Heart right ventricle (tissue), 16 donors: ENCODE measurements at regions of chrX and their contacts with region 1.

Region 1: GRCh38 chrX:12080265-12080664 is 58.0 kb upstream of the FRMPD4 start:
- DNase-seq: no peak
- ATAC-seq: no peak
- H3K4me3 ChIP-seq: no peak overlapping the region
- H3K27ac ChIP-seq: no peak overlapping the region
- H3K4me1 ChIP-seq: no peaks in the 10 kb centered on the region
- H3K27me3 ChIP-seq: no peaks in the 10 kb centered on the region
- CTCF ChIP-seq: peak in 8 of 9 donors; percentile 25 to 62 (median 46)

Region 2: DNA sequence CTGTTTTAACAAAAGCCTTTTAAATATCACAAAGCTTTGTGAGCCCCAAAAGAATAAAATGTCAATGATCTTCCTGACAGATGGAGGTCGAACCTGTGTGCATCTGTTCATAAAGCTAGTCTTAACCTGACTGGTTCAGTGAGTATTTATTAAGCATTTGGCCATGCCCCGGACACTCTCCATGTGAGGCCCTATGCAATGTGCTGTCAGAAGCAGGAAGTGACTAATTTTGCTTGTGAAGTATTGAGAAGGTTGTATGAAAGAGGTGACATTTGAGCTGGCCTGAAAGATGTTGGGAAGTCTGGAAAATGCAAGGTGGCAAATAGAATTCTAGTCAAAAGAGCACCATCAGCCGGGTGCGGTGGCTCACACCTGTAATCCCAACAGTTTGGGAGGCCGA is 150.8 kb before region 1 on chrX:
- intact Hi-C with region 1: no loop called
- DNase-seq: no peak
- ATAC-seq: no peak
- H3K4me3 ChIP-seq: no peak overlapping the region
- H3K27ac ChIP-seq: no peak overlapping the region
- H3K4me1 ChIP-seq: no peaks in the 10 kb centered on the region
- H3K27me3 ChIP-seq: no peaks in the 10 kb centered on the region
- CTCF ChIP-seq: no peak

Region 3: DNA sequence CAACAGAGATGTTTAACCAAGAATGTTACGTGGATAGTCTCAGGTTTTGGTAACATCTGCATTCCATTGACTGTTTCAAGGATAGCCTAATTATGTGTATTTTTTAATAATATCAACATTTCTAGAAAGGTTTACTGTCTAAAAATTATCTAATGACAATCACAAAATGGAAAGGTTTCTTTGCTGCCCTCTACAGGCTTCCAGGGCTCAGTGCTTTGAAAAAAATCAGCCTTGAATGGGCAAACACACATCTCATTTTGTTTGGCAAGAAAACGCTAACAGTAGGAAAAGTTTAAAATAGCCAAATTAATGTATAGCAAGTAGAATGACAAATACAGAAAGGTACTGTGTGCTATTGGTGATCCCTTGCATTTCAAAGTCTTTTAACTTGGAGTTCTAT is 487.6 kb after region 1 on chrX:
- intact Hi-C with region 1: loop called in 1 of 10 experiments (anchors 5 kb)
- DNase-seq: no peak
- ATAC-seq: no peak
- H3K4me3 ChIP-seq: no peak overlapping the region
- H3K27ac ChIP-seq: no peak overlapping the region
- H3K4me1 ChIP-seq: peaks cover 0 to 4% (median 0%) of the 10 kb centered on the region in 9 donors
- H3K27me3 ChIP-seq: peaks cover 0 to 5% (median 0%) of the 10 kb centered on the region in 7 donors
- CTCF ChIP-seq: peak in 8 of 9 donors; percentile 21 to 65 (median 56)

Region 4: GRCh38 chrX:12693754-12694153 is 613.5 kb after region 1 on chrX:
- intact Hi-C with region 1: loop called in 2 of 10 experiments (anchors 10 kb)
- DNase-seq: no peak
- ATAC-seq: no peak
- H3K4me3 ChIP-seq: no peak overlapping the region
- H3K27ac ChIP-seq: no peak overlapping the region
- H3K4me1 ChIP-seq: no peaks in the 10 kb centered on the region
- H3K27me3 ChIP-seq: peaks cover 0 to 46% (median 0%) of the 10 kb centered on the region in 7 donors
- CTCF ChIP-seq: no peak

Region 5: DNA sequence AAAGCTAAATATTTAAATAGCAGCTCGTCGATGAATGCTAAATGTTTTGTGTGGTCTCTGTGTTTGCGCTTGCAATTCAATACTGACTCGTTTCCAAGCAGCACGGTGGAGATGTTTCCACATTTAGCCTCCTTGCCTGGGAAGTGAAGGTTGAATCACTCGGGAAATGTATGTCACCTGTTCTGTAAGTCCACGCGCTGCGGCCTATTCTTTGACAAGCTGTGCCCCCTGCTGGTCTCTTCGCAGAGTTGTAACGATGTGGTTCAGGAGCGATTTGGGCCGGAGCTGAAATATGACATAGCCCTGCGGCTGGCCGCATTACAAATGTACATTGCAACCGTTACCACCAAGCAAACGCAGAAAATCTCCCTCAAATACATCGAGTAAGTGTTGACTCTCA is 621.4 kb after region 1 on chrX:
- intact Hi-C with region 1: loop called in 5 of 10 experiments (anchors 5 to 10 kb)
- DNase-seq: peak in 1 of 2 donors; percentile 6
- ATAC-seq: peak in 1 of 8 donors; percentile 71
- H3K4me3 ChIP-seq: no peak overlapping the region
- H3K27ac ChIP-seq: no peak overlapping the region
- H3K4me1 ChIP-seq: no peaks in the 10 kb centered on the region
- H3K27me3 ChIP-seq: peaks cover 0 to 38% (median 0%) of the 10 kb centered on the region in 7 donors
- CTCF ChIP-seq: peak in 7 of 9 donors; percentile 25 to 59 (median 51)

Region 6: DNA sequence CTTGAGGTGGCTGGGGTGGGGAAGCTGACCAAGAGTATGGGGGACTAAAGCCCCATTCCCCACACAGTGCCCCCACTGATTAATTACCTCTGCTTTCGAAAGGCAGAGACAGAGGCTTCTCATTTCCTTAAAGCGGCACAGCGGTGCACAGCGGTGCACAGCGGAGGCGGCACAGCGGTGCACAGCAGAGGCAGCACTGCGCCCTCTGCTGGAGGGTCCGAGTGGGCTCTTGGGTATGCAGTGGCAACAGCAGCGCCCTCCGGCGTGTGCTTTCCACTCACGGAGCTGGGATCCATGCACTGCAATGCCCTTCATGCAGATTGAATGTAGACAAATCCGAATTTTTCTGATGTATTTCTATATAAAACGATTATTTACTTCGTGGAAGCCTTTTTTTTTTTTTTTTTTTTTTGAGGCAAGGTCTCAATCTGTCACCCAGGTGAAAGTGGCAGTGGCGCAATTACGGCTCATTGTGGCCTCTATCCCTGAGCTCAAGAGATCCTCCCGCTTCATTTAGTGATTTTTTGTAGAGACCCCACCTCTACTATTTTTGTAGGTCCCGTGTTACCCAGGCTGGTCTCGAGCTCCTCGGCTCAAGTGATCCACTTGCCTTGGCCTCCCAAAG is 691.3 kb after region 1 on chrX:
- intact Hi-C with region 1: loop called in 1 of 10 experiments (anchors 5 kb)
- DNase-seq: peak; percentile 3 to 39
- ATAC-seq: peak in 5 of 8 donors; percentile 51 to 77 (median 66)
- H3K4me3 ChIP-seq: no peak overlapping the region
- H3K27ac ChIP-seq: no peak overlapping the region
- H3K4me1 ChIP-seq: no peaks in the 10 kb centered on the region
- H3K27me3 ChIP-seq: peaks cover 0 to 74% (median 0%) of the 10 kb centered on the region in 7 donors
- CTCF ChIP-seq: peak in 8 of 9 donors; percentile 16 to 70 (median 47)